ENCODE measurements at regions of chr2 and their contacts with region 1.

Region 1: DNA sequence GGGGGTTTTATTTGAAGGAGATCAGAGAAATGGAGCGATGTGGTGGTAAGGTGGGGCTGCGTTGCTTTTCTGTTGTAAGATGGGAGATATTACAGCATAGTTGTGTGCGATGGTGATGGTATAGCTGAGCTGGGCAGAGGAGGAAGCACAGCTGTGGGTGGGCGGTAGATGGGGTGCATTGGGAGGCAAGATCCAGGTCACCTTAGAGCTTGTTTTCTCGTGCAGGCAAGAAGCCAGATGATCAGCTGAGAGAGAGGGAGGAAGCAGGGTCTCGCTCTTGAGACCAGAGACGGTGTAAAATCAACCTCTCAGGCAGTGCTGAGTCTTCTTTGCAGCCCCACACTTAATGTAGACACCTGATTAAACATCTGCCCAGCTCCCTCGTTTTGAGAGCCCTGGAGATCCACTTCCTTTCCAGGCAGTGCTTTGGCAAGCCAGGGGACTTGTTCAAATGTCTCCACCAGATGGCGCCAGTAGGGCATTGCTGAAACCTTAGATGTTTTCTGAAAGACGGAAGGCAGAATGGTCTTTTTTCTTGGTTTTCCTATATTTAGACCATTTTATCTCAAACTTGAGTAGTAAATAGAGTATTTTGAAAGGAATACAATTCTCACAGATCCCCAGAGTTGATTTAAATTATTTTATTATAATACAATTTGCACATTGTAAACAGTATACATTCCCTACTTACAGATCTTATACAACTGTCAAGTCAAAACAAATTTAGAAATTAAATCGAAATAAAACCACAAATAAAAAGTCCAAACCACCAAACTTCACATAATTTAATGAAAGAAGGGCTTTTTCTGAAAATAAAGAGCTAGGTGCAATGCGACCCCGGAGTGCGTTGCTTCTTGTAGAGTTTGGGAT is 21.1 kb upstream of the LYPD6B start:
- DNase-seq: peak; percentile 87
- ATAC-seq: peak; percentile 66
- H3K4me3 Mint-ChIP-seq: no peak overlapping the region
- H3K27ac Mint-ChIP-seq: no peak overlapping the region
- H3K4me1 Mint-ChIP-seq: no peaks in the 10 kb centered on the region
- H3K27me3 Mint-ChIP-seq: peaks cover 1% of the 10 kb centered on the region
- CTCF ChIP-seq: peak; percentile 79

Region 2: DNA sequence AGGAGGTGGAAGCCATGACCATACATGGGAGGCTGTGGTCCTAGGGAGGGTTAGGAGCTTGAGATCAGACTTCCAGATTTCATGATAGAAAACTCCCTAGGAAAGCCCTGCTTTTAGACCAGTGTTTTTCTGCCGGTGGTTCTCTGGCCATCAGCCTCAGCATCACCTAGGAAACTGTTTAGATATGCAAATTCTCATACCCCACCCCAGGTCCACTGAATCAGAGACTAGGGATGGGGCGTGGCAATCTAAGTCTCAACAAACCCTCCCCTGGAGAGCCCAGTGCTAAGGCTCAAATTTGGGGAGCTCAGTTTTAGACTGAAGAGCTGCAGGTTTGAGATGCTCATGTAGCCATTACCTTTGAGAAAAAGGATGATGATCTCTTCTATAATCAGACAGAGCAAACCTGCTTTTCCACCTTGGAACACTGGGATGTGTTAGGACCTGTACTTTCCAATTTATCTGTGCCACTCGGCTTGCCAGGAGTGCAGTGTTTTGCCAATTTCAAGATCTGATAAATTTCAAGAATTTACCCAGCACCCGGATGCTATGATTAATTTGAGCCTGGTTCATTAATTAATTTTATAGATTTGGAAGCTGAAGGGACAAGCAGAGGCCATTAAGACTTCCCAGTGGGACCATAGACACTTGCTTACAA is 10.3 kb before region 1 on chr2:
- CTCF ChIA-PET with region 1: interaction called, 21 read pairs
- POLR2A ChIA-PET with region 1: no interaction called
- intact Hi-C with region 1: no loop called
- DNase-seq: no peak
- ATAC-seq: no peak
- H3K4me3 Mint-ChIP-seq: no peak overlapping the region
- H3K27ac Mint-ChIP-seq: no peak overlapping the region
- H3K4me1 Mint-ChIP-seq: no peaks in the 10 kb centered on the region
- H3K27me3 Mint-ChIP-seq: no peaks in the 10 kb centered on the region
- CTCF ChIP-seq: no peak

Region 3: DNA sequence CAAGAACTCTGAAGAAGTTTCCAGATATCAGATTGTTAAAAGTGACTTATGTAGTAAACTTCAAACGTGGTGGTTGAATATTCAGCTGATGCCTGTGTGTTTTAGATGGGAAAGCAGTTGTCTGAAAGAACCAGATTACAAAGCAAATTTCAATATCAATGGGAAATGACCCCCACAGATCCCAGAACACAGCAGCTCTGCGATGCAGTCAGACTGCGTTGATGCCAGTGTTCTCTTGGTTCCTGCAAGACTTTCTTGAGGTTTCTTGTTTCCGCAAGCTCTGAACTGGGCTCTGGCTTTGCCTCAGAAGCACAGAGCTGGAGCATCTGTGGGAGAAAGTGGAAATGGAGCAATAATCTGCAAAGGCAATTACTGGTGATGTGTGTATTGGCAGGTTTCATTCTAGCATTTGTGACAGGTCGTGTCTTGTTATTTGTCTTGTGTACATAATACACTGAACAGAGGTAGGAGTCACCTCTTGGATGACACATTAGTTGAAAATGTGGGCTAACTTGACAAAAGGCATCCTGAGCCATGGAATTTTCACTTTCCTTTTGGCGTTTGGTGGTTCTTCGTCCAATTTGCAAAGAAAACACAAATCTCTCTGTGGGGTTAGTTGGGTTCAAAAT is 10.4 kb after region 1 on chr2:
- CTCF ChIA-PET with region 1: interaction called, 29 read pairs
- POLR2A ChIA-PET with region 1: no interaction called
- intact Hi-C with region 1: no loop called
- DNase-seq: no peak
- ATAC-seq: no peak
- H3K4me3 Mint-ChIP-seq: no peak overlapping the region
- H3K27ac Mint-ChIP-seq: no peak overlapping the region
- H3K4me1 Mint-ChIP-seq: no peaks in the 10 kb centered on the region
- H3K27me3 Mint-ChIP-seq: peaks cover 12% of the 10 kb centered on the region
- CTCF ChIP-seq: no peak

Region 4: DNA sequence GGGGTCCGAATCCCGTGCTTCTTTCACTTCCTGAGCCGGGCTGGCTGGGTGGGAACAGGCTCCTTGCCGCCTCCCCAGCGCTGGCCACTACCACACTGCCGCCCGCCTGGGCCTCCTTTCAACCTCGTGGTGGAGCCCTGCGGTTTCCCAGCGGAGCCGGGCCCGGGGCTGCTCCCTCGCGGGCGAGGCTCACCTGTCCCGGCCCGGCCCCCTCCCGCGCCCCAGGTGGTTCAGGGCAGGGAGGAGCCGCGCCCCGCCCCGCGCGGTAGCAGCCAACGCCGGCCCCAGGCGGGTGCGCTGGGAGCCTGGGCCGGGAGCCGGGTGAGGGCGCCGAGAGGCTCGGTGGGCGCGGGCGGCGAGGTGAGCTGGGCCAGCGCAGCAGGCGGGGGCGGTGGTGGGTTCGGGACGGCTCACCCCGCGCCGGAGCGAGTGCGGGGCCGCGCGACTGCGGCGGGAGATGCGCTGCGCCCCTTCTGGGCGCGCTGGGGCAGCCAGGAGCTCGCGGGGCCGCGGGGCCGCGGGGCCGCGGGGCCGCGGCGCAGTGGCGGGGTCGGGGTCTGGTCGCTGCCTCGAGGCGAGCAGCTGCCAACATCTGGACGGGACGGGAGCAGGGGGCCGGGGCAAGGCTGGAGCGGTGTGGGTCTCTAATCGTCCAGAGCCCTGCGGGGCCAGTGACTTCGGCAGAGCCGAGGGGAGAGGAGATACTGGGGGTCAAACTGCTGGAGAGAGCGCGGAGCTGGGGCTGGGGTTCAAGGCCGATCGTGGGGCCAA is 21.3 kb after region 1 on chr2 and contains the start of gene LYPD6B:
- CTCF ChIA-PET with region 1: interaction called, 29 read pairs
- POLR2A ChIA-PET with region 1: no interaction called
- intact Hi-C with region 1: no loop called
- DNase-seq: no peak
- ATAC-seq: peak; percentile 37
- H3K4me3 Mint-ChIP-seq: no peak within 1 kb of the TSS
- H3K27ac Mint-ChIP-seq: no peak within 1 kb of the TSS
- H3K4me1 Mint-ChIP-seq: no peaks in the 10 kb centered on the region
- H3K27me3 Mint-ChIP-seq: peaks cover 50% of the 10 kb centered on the region
- CTCF ChIP-seq: no peak
- total RNA-seq, gene LYPD6B: not detected

Region 5: GRCh38 chr2:149313512-149313972 is 296.2 kb after region 1 on chr2:
- CTCF ChIA-PET with region 1: interaction called, 14 read pairs
- POLR2A ChIA-PET with region 1: interaction called, 3 read pairs
- intact Hi-C with region 1: no loop called
- DNase-seq: peak; percentile 4
- ATAC-seq: peak; percentile 64
- H3K4me3 Mint-ChIP-seq: no peak overlapping the region
- H3K27ac Mint-ChIP-seq: no peak overlapping the region
- H3K4me1 Mint-ChIP-seq: peaks cover 4% of the 10 kb centered on the region
- H3K27me3 Mint-ChIP-seq: peaks cover 18% of the 10 kb centered on the region
- CTCF ChIP-seq: peak; percentile 62

Region 6: DNA sequence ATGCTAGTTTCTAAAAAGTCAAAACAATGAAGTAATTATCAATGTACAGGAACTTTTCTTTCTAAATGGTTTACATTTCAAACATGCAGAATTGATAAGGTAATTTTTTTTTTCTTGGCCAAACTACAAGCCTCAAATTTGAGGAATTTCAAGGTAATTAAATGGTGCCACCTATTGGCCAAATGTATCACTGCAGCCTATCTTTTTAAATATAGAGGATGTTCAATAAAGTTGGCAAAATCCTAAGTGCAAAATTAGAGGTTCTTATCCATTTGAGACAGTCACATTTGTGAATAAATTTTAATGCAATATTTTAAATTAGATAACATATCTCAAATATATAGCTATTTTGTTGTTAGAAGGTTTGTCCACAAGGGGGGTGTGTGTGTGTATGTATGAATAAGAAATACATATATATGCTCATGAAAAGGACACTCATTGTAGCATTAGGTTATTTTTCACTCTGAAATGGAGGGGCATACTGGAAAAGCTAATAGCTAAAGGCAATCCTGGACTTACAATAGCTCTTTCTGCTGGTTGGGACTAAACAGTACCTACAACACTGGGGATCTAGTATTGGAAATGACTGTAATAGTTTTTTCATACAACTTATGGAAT is 544.1 kb after region 1 on chr2:
- CTCF ChIA-PET with region 1: interaction called, 66 read pairs
- POLR2A ChIA-PET with region 1: no interaction called
- intact Hi-C with region 1: loop called (anchors 1 kb)
- DNase-seq: peak; percentile 10
- ATAC-seq: no peak
- H3K4me3 Mint-ChIP-seq: no peak overlapping the region
- H3K27ac Mint-ChIP-seq: no peak overlapping the region
- H3K4me1 Mint-ChIP-seq: no peaks in the 10 kb centered on the region
- H3K27me3 Mint-ChIP-seq: peaks cover 4% of the 10 kb centered on the region
- CTCF ChIP-seq: peak; percentile 96